Activated CD8-positive, alpha-beta T cell treated with anti-CD3 and anti-CD28 coated beads, Interleukin-2, amount 10 ng/mL, durations not matched to agents 7 days and 5 days (primary cell): ENCODE measurements at regions of chr1 and their contacts with region 1.

Region 1: GRCh38 chr1:161382214-161383019 is 14.7 kb upstream of the CFAP126 start:
- DNase-seq: no peak
- ATAC-seq: peak; percentile 84
- H3K4me3 Mint-ChIP-seq: no peak overlapping the region
- H3K27ac Mint-ChIP-seq: no peak overlapping the region
- H3K4me1 Mint-ChIP-seq: peaks cover 16% of the 10 kb centered on the region
- H3K27me3 Mint-ChIP-seq: no peaks in the 10 kb centered on the region

Region 2: DNA sequence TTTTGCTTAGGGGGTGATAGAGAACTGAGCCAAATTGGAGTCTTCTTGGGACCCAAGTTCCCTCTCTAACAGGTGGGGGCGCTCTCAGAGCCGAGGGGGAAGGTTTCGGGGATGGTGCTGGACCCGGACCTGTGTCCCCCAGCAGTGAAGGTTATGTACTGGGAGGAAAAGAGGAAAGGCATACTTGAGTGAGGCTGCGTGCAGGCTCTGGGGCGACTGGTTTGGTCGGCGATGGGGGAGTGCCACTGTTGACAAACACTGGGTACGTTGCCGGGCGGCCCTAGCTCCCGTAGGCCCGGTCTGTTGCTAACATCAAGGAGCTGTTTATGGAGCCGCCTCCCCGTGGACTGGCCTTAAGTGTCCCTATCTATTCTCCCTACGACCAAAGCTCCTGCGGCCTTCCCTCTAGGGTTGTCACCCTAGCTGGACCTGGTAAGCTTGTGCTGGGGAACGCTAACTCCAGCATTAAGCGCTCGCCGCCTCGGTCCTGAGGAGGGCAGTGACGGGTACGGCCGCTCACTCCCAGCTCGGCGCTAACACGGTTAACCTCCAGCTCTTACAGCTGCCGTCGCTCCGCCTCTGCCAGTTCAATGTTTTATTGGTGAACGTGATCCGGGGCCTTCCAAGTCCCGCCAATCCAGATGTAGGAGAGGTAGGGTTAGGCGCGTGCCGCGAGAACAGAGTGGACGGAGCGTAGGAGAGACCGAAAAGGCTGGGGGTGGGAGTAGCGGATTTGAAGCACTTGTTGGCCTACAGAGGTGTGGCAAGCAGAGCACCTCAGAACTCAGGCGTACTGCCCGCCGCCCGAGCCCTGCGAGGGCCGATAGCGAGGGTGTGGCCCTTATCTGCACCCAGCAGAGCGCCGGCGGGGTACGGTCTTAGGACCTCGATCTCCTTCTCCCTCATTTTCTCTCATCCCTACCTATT is 216.4 kb before region 1 on chr1 and contains the start of gene PPOX:
- CTCF ChIA-PET with region 1: interaction called, 38 read pairs
- POLR2A ChIA-PET with region 1: interaction called, 4 read pairs
- DNase-seq: peak; percentile 98
- ATAC-seq: peak; percentile 93
- H3K4me3 Mint-ChIP-seq: peak within 1 kb of the TSS; percentile 90
- H3K27ac Mint-ChIP-seq: peak within 1 kb of the TSS; percentile 96
- H3K4me1 Mint-ChIP-seq: peaks cover 36% of the 10 kb centered on the region
- H3K27me3 Mint-ChIP-seq: no peaks in the 10 kb centered on the region
- total RNA-seq, gene PPOX: 37.7 to 38.5 TPM

Region 3: DNA sequence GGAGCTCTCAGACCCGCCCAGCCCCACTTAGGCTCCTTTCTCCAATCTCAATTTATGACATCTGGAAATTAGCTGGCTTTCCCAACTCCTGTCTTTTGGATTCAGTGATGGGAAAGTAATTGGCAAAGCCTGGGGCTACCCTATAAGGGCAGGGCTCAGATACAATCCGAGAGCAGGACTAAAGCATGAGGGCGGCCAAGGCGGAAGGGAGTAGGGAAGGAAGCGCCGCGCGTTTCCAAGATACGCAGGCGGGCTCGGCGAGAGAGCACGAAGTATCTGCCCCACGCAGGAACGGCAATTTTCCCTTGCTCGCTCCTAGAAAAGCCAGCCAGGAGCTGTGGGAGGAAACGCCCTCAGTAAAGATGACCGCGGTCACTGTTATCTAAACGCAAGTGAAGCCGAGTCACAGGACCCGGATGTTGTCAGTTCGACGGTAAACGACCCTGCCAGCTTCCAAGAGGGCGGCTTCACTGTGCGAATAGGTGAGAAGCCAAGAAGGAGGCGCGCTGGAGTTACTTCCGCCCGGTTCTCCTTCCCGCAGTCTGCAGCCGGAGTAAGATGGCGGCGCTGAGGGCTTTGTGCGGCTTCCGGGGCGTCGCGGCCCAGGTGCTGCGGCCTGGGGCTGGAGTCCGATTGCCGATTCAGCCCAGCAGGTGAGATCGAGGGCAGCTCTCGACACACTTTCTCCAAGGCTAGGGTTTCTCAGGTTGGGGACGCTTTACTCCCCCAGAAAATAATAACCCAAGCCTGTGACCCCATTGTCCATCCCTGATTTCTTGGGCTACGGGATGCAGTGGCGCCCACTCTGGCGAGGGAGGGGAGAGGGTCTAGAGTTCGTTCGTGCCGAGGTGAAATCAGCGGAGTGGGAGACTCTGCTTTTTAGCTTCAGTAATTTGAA is 180.3 kb before region 1 on chr1 and contains the start of gene NDUFS2:
- CTCF ChIA-PET with region 1: interaction called, 18 read pairs
- POLR2A ChIA-PET with region 1: interaction called, 4 read pairs
- DNase-seq: peak; percentile 99
- ATAC-seq: peak; percentile 99
- H3K4me3 Mint-ChIP-seq: peak within 1 kb of the TSS; percentile 93
- H3K27ac Mint-ChIP-seq: peak within 1 kb of the TSS; percentile 95
- H3K4me1 Mint-ChIP-seq: peaks cover 78% of the 10 kb centered on the region
- H3K27me3 Mint-ChIP-seq: no peaks in the 10 kb centered on the region
- total RNA-seq, gene NDUFS2: 73.6 to 76.8 TPM

Region 4: GRCh38 chr1:161225534-161226319 is 156.7 kb before region 1 on chr1 and contains the start of gene TOMM40L:
- CTCF ChIA-PET with region 1: interaction called, 223 read pairs
- POLR2A ChIA-PET with region 1: interaction called, 6 read pairs
- DNase-seq: peak; percentile 96
- ATAC-seq: peak; percentile 98
- H3K4me3 Mint-ChIP-seq: peak within 1 kb of the TSS; percentile 95
- H3K27ac Mint-ChIP-seq: peak within 1 kb of the TSS; percentile 99
- H3K4me1 Mint-ChIP-seq: peaks cover 43% of the 10 kb centered on the region
- H3K27me3 Mint-ChIP-seq: no peaks in the 10 kb centered on the region
- total RNA-seq, gene TOMM40L: 19.1 to 22.0 TPM

Region 5: GRCh38 chr1:161314201-161314981 is 68.0 kb before region 1 on chr1 and contains the start of gene SDHC:
- CTCF ChIA-PET with region 1: interaction called, 13 read pairs
- POLR2A ChIA-PET with region 1: no interaction called
- DNase-seq: peak; percentile 93
- ATAC-seq: peak; percentile 97
- H3K4me3 Mint-ChIP-seq: peak within 1 kb of the TSS; percentile 99
- H3K27ac Mint-ChIP-seq: peak within 1 kb of the TSS; percentile 97
- H3K4me1 Mint-ChIP-seq: peaks cover 29% of the 10 kb centered on the region
- H3K27me3 Mint-ChIP-seq: peaks cover 3% of the 10 kb centered on the region
- total RNA-seq, gene SDHC: 151 to 163 TPM

Region 6: DNA sequence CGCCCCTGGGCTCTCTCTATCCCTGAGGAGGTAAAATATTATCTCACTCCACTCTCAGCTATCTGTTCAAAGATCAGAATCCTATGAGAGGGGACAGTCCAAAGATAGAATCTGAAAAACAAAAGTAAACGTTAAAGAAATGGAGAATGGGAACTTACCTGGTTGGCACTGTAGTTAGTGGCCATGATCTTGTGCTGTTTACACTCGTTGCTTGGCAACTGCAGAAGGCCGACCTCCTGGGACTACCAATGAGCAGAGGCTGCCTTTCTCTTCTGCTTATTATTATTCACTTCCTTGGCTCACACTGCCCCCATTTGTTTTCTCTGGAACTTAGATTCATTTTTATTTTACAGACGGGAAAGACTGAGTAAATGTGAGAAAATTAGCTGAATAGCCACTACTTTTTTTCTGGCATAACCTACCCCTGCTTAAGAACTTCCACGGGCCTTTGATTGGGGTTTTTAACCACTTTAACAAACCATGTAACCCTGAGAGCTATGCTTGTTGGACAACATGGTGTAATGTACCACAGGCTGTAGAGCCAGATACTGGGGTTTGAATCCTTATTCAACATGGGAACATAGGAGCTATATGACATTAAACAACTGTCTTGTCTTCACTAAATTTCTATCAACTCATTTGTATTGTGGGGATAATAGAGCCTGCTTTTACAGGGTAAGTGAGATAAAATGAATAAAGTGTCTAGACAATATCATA is 14.6 kb before region 1 on chr1 and contains the start of gene CFAP126:
- CTCF ChIA-PET with region 1: interaction called, 33 read pairs
- POLR2A ChIA-PET with region 1: no interaction called
- DNase-seq: peak; percentile 61
- ATAC-seq: peak; percentile 99
- H3K4me3 Mint-ChIP-seq: no peak within 1 kb of the TSS
- H3K27ac Mint-ChIP-seq: peak within 1 kb of the TSS; percentile 11
- H3K4me1 Mint-ChIP-seq: peaks cover 4% of the 10 kb centered on the region
- H3K27me3 Mint-ChIP-seq: no peaks in the 10 kb centered on the region
- total RNA-seq, gene CFAP126: not detected